A673 (cell line): ENCODE measurements at regions of chr1 and their contacts with region 1.

Region 1: DNA sequence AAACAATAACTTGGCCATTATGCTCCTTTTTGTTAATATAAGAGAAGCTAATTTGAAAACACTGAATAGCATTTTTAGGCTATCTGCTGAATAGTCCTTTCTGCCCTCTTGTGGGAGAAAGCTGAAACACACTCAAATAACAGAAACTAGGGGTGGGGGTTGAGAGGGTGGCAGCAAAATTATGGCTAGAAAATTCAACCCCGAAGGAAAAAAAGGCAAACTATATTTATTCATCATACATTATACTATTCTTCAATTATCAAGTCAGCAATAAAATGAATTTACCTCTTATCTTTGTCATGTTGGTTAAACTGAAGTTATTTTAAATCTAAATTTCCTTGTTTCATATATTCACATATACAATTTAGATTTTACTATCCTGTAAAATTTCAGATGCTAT is 255.9 kb downstream of the FAF1 start:
- DNase-seq: peak; percentile 63
- H3K4me3 ChIP-seq: no peak overlapping the region
- H3K27ac ChIP-seq: no peak overlapping the region
- H3K4me1 ChIP-seq: peaks cover 19% of the 10 kb centered on the region
- H3K27me3 ChIP-seq: no peaks in the 10 kb centered on the region
- CTCF ChIP-seq: peak; percentile 87

Region 2: DNA sequence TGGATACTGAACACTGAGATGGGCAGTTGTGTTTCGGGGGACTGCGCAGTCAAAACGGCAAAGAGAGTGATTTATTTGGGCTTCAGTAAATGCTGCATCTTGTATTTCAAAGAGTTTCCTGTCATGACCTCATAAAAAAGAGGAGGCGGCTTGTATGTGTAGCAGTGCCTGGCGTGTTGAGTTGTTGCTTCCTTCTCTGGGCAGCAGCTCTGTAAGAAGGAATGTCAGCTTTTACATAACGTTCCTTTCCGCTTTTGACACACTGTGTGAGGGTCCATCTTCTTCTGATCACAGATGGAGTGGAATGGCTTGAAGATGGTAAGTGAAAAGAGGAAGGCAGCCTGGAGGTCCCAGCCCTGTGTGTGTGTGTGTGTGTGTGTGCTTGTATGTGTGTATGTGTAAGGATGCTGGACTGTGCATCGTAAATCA is 594.5 kb before region 1 on chr1:
- CTCF ChIA-PET with region 1: no interaction called
- POLR2A ChIA-PET with region 1: no interaction called
- intact Hi-C with region 1: no loop called
- DNase-seq: peak; percentile 18
- H3K4me3 ChIP-seq: no peak overlapping the region
- H3K27ac ChIP-seq: no peak overlapping the region
- H3K4me1 ChIP-seq: no peaks in the 10 kb centered on the region
- H3K27me3 ChIP-seq: peaks cover 88% of the 10 kb centered on the region
- CTCF ChIP-seq: no peak

Region 3: DNA sequence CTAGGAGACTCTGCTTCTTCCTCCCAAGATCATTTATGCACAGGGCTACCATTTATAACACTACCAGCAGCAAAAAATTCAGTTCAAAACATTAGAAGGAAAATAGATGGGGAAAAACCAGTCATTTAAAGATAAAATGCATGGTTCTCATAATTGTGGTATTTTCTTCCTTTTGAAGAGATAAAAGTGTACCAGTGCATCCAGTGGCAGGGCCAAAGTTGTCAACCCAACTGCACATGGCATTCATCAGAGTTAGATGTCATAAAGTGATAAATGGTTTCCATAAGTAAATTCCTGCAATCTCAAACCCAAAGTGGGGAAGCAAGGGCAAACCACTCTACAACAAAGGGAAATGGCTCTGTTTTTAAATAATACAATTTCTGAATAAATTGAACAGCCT is 161.8 kb before region 1 on chr1:
- CTCF ChIA-PET with region 1: no interaction called
- POLR2A ChIA-PET with region 1: no interaction called
- intact Hi-C with region 1: no loop called
- DNase-seq: no peak
- H3K4me3 ChIP-seq: no peak overlapping the region
- H3K27ac ChIP-seq: no peak overlapping the region
- H3K4me1 ChIP-seq: no peaks in the 10 kb centered on the region
- H3K27me3 ChIP-seq: no peaks in the 10 kb centered on the region
- CTCF ChIP-seq: no peak

Region 4: GRCh38 chr1:50610563-50610962 is 93.6 kb before region 1 on chr1:
- CTCF ChIA-PET with region 1: no interaction called
- POLR2A ChIA-PET with region 1: no interaction called
- intact Hi-C with region 1: loop called (anchors 5 kb)
- DNase-seq: no peak
- H3K4me3 ChIP-seq: no peak overlapping the region
- H3K27ac ChIP-seq: no peak overlapping the region
- H3K4me1 ChIP-seq: peaks cover 14% of the 10 kb centered on the region
- H3K27me3 ChIP-seq: no peaks in the 10 kb centered on the region
- CTCF ChIP-seq: no peak